Activated CD4-positive, alpha-beta T cell treated with anti-CD3 and anti-CD28 coated beads, Interleukin-2, amount 10 ng/mL, durations not matched to agents 24 days and 14 days (primary cell): ENCODE measurements at regions of chr7 and their contacts with region 1.

Region 1: GRCh38 chr7:35424869-35425495 is 171.1 kb upstream of the TBX20 start:
- DNase-seq: peak; percentile 84
- H3K4me3 Mint-ChIP-seq: no peak overlapping the region
- H3K27ac Mint-ChIP-seq: no peak overlapping the region
- H3K4me1 Mint-ChIP-seq: no peaks in the 10 kb centered on the region
- H3K27me3 Mint-ChIP-seq: peaks cover 9% of the 10 kb centered on the region

Region 2: DNA sequence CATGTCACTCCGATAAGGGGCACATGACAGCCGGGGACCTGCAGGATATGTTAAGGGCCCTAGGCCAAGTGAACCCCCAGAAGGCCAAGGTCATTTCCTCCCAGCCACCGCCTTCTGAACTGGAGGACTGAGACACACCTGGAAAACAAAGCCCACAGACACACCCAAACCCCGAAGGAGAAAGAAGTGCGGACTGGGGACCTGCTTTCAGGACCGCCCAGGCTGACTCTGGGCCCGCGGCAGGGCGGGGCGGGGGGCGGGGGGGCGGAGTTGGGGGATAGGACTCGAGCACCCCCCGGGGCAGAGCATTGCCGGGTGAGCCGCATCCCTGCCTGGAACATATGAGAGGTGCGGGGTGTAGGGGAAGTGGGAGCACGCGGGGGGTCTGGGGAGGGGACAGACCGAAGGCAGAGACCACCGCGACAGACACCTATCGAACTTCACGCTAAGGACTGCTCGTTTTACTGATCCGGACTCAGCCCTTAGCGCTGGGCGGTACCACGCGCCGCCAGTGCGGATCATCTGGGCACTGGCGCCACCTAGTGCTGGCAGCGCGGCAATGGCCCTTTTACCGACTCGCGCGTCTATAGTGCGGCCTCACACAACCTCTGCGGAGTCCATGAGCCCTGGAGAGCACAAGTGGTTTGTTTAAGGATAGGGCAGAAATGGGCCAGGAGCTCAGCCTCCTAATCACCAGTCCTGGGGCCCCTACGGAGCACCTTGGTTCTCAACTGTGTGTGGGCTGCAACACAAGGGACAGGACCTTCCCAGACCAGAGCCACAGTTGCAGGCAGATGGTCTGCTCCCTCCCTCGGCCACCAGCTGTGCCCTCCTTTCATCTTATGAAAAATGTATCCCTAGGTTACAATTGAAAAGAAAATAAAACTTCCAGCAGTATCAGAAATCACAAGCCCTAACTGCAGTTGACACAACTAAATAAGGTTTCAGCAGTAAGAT is 112.4 kb after region 1 on chr7:
- intact Hi-C with region 1: loop called (anchors 1 kb)
- DNase-seq: peak; percentile 94
- H3K4me3 Mint-ChIP-seq: peak overlapping the region; percentile 77
- H3K27ac Mint-ChIP-seq: no peak overlapping the region
- H3K4me1 Mint-ChIP-seq: peaks cover 2% of the 10 kb centered on the region
- H3K27me3 Mint-ChIP-seq: peaks cover 24% of the 10 kb centered on the region

Region 3: DNA sequence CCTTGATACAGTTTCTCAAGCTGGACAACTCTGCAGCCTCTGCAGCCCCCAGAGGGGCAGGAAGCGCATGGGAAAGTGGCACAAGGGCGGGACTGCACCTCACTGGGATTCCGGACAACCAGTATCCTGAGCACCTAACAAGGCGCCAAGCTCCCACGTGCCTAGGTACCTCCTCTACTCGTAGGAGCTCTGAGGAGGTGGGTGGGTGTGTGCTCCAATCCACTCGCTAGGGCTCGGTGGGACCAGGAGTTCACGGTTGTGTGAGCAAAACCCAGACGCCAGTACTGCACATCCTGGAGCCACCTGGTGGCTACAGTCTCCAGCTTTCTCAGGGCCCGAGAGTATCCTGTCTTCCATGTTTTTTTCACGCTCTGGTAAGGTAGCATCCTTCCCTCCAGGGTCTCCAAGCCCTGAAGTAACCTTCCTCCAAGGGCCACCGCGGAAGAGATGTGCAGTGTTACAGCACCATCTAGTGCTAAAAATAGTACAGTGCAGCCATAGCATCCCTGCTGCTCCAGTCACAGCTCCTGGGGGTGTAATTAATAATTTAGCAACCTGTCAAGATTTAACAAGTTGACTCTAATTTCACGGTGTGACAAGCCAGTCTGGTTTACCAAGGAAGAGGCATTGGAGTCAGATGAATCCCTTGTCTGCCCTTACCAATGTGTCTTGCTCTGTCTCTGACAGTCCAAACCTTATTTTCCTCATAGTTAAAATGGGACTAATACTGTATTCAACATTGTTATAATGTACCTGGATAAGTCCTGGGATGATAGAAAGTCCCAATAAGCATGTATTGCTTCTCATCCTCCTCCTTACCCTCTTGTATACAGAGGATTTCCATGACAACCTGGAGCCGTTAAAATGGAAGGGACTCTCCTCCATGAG is 199.6 kb after region 1 on chr7:
- intact Hi-C with region 1: loop called (anchors 1 kb)
- DNase-seq: peak; percentile 78
- H3K4me3 Mint-ChIP-seq: no peak overlapping the region
- H3K27ac Mint-ChIP-seq: no peak overlapping the region
- H3K4me1 Mint-ChIP-seq: peaks cover 2% of the 10 kb centered on the region
- H3K27me3 Mint-ChIP-seq: peaks cover 4% of the 10 kb centered on the region